Right ventricle myocardium inferior (tissue), 1 donor: ENCODE measurements at regions of chr1 and their contacts with region 1.

Region 1: DNA sequence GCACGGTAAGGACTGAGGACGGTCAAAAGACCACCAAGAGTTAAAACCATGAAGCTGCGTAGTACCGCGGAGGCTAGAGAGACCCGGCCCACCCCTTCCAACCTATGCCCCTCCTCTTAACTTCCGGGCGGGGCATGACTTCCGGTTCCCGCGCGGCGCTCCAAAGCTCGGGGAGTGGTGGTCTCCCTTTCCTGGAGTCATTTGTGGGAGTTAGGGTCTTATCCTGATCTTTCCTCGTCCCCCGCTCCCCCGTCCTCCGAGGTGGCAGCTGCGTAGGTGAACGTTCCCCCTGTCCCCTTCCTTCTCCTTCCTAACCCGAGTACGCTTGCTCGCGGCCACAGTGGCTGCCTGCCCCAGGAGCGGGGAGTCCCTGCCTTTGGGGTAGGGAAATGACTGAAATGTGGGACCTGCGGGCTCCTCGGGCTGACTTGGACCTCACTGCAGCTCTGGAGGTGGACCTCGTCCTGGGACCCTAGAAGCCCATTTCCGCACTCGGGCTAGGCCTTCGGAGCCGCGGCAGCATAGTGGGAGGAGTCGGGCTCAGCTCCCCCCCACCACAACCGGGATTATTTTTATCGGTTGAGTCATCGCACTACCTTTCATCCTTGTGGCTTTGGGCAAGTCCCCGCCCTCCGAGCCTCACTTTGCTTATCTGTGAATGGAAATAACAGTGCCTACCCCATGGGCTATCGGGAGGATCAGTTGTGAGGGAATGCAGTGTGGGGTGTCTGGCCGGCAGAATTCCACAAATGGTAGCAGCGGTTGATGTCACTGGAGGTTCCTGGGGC is 24.1 kb downstream of the CELA3A start:
- DNase-seq: peak; percentile 90
- ATAC-seq: peak; percentile 97

Region 2: DNA sequence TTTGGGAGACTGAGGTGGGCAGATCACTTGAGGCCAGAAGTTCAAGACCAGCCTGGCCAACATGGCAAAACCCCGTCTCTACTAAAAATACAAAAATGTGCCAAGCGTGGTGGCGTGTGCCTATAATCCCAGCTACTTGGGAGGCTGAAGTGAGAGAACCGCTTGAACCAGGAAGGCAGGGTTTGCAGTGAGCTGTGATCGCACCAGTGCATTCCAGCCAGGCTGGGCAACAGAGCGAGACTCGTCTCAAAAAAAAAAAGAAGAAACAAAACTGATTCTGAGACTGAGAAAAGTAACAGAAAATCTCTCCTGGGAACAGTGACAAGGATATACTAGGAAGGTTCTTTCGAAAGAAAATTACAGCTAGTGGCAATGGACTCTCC is 263.5 kb before region 1 on chr1:
- intact Hi-C with region 1: no loop called
- DNase-seq: no peak
- ATAC-seq: no peak

Region 3: GRCh38 chr1:21782868-21783678 is 242.5 kb before region 1 on chr1 and contains the start of gene USP48:
- intact Hi-C with region 1: loop called (anchors 1 kb)
- DNase-seq: peak; percentile 98
- ATAC-seq: peak; percentile 98
- total RNA-seq, gene USP48: 42.7 TPM

Region 4: DNA sequence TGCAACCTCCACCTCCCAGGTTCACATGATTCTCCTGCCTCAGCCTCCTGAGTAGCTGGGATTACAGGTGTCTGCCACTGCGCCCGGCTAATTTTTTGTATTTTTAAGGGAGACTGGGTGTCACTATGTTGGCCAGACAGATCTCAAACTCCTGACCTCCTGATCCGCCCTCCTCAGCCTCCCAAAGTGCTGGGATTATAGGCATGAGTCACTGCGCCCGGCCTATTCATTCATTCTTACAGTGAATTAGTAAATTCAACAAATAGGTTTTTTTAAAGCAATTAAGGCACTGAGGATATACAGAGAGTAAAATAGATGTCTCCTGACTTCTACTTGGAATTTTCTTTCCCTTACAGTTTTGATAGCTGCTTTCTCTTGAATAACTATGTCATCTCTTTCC is 70.5 kb after region 1 on chr1:
- intact Hi-C with region 1: no loop called
- DNase-seq: no peak
- ATAC-seq: no peak

Region 5: GRCh38 chr1:22131875-22132486 is 106.4 kb after region 1 on chr1:
- intact Hi-C with region 1: no loop called
- DNase-seq: no peak
- ATAC-seq: no peak

Region 6: DNA sequence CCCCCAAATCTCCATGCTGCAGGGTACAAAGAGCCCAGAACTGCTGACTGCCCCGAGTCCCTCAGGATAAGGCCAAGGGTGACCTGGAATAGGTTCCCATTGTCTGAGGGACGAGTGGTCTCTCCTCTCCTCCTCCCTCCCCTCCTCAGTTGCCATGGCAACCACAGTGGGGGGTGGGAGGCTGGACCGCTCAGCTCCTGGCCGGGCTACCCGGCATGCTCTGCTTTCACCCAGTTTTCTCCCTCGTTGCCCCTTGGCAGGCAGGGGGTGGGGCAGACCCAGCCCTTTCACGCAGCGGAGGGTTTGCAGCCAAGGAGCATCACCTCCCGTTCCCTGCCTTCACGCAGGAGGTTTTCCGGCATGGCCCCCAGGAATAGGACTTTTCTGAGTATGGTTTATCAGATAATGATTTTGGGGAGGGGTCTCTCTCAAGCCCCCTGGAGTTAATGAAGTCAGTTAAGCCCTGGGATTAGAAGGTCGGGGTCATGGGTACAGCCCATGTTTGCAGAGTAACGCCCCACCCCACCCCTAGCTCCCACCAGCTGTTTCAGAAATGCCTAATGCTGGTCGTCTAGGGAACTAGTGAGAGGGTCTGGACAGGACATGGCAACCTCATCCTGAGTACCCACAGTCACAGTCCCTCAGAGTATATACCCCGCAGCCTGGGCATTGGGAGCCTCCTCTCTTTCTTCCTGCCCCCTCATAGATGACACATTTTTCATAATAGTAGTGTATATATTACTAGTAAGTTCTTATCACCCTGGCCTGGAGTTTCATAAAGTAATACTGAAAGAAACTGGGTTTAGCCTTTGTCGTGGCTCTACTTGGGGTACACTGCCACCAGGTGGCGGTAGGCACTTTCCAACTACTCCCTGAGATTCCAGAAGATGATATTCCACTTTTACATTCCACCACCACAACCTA is 648.2 kb after region 1 on chr1:
- intact Hi-C with region 1: no loop called
- DNase-seq: no peak
- ATAC-seq: no peak